ENCODE measurements at regions of chr10 and their contacts with region 1.

Region 1: GRCh38 chr10:78349911-78350663 is 316.4 kb downstream of the RPS24 start:
- DNase-seq: no peak
- ATAC-seq: no peak

Region 2: DNA sequence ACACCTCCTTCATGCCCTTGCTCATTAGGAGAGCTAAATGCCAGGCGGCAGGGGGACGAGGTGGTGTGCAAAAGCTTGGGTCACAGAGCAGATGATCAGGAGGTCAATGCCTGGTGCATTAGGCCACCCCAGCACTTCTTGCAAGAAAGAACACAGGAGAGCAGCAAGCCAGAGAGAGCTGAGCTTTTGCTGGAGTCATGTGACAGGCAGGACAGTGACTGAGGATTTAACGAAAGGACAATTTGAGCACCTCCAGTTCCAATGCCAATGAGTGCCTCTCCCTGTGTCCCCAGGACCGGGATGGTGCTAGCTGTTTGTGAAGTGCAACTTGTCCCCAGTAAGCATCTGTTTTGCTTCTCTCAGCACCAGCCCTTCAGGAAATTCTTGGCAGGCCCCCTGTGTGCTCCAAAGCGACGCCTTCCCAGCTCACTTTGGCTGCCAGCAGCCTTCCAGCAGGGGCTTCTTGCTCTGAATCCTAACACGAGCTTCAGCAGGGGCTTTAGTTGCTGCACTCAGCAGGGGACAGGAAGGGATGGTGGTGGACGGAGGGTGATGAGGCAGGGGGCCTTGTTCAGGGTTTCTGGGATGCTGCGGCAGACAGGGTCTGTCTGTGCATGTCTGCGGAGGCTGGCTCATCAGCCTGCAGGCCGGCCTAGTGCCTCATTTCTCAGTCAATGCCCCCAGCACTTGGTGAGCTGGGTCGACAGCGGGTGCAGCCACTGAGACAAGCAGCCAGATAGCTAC is 51.7 kb after region 1 on chr10:
- intact Hi-C with region 1: loop called (anchors 2 kb)
- DNase-seq: peak; percentile 73
- ATAC-seq: peak; percentile 89

Region 3: DNA sequence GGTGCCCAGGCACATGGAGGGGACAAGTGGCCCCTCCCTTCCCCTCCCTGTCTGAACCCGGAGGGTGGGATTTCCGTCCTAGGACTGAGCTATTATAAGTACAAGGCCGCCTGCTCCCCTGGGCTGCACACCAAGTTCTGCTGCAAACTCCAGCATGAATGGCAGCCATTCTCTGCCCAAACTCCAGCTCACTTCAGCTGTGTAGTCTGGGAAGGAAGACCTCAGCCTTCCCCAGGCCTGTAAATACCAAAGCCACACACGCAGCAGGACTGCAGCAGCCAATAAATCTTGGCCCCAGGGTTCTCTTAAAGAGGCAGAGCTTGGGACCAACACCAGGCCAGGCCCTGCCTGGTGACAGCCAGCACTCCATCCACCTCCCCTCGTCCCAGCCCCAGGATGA is 427.4 kb after region 1 on chr10:
- intact Hi-C with region 1: no loop called
- DNase-seq: peak; percentile 85
- ATAC-seq: peak; percentile 89

Measured in Right ventricle myocardium inferior (tissue), 1 donor.